IMR-90 (cell line): ENCODE measurements at regions of chr19 and their contacts with region 1.

Region 1: GRCh38 chr19:37583340-37583739 is 11.3 kb downstream of the ZNF571 start:
- DNase-seq: no peak
- ATAC-seq: no peak
- H3K4me3 ChIP-seq: no peak overlapping the region
- H3K27ac ChIP-seq: no peak overlapping the region
- H3K4me1 ChIP-seq: no peaks in the 10 kb centered on the region
- H3K27me3 ChIP-seq: no peaks in the 10 kb centered on the region
- CTCF ChIP-seq: no peak
- POLR2A ChIP-seq: no peak
- RAD21 ChIP-seq: no peak

Region 2: GRCh38 chr19:37551129-37551993 is 32.0 kb before region 1 on chr19:
- CTCF ChIA-PET with region 1: no interaction called
- POLR2A ChIA-PET with region 1: interaction called, 10 read pairs
- dilution Hi-C with region 1: no loop called
- in situ Hi-C with region 1: no loop called
- intact Hi-C with region 1: no loop called
- DNase-seq: peak; percentile 44
- ATAC-seq: peak; percentile 76
- H3K4me3 ChIP-seq: peak overlapping the region; percentile 80
- H3K27ac ChIP-seq: peak overlapping the region; percentile 39
- H3K4me1 ChIP-seq: no peaks in the 10 kb centered on the region
- H3K27me3 ChIP-seq: no peaks in the 10 kb centered on the region
- CTCF ChIP-seq: peak; percentile 37
- POLR2A ChIP-seq: no peak
- RAD21 ChIP-seq: peak; percentile 30; the same call in 1 of the 2 replicates

Region 3: DNA sequence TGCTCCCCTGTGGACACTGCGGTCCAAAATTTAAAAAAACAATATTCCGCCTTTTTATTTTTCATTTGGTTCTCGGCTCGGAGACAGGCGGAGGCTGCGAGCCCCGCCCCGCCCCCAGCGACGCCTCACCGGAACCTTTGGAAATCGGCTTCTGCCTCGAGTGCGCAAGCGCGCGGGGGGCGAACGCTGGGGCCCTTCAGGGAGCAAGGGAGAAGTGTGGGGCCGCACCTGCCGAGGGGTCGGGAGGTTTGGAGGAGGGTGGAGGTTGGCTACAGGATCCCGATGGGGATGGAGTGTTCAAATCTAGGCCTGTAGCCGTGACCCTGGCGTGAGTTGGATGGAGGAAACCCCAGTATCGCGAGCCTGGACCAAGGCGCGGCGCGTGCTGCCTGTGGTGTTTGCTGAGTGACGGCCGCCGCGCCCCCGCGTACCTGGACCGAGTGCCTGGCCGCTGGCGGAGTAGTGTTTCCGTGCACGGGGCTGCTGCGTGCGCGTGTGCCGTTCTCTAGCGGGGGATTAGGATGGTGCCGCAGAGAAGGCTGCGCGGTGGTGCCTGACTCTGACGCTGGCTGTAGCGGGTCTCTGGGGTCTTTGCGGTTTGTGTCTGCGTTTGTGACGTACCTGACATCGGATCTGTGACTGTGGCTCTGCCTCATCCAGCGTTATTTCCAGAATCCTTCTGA is 72.5 kb after region 1 on chr19:
- CTCF ChIA-PET with region 1: no interaction called
- POLR2A ChIA-PET with region 1: no interaction called
- dilution Hi-C with region 1: no loop called
- in situ Hi-C with region 1: no loop called
- intact Hi-C with region 1: no loop called
- DNase-seq: peak; percentile 68
- ATAC-seq: peak; percentile 78
- H3K4me3 ChIP-seq: peak overlapping the region; percentile 89
- H3K27ac ChIP-seq: peak overlapping the region; percentile 71
- H3K4me1 ChIP-seq: no peaks in the 10 kb centered on the region
- H3K27me3 ChIP-seq: no peaks in the 10 kb centered on the region
- CTCF ChIP-seq: no peak; the same call in 1 of the 2 replicates
- POLR2A ChIP-seq: no peak; the same call in 1 of the 2 replicates
- RAD21 ChIP-seq: no peak